Activated CD4-positive, alpha-beta T cell treated with anti-CD3 and anti-CD28 coated beads for 36 hours (primary cell): ENCODE measurements at regions of chr1 and their contacts with region 1.

Region 1: DNA sequence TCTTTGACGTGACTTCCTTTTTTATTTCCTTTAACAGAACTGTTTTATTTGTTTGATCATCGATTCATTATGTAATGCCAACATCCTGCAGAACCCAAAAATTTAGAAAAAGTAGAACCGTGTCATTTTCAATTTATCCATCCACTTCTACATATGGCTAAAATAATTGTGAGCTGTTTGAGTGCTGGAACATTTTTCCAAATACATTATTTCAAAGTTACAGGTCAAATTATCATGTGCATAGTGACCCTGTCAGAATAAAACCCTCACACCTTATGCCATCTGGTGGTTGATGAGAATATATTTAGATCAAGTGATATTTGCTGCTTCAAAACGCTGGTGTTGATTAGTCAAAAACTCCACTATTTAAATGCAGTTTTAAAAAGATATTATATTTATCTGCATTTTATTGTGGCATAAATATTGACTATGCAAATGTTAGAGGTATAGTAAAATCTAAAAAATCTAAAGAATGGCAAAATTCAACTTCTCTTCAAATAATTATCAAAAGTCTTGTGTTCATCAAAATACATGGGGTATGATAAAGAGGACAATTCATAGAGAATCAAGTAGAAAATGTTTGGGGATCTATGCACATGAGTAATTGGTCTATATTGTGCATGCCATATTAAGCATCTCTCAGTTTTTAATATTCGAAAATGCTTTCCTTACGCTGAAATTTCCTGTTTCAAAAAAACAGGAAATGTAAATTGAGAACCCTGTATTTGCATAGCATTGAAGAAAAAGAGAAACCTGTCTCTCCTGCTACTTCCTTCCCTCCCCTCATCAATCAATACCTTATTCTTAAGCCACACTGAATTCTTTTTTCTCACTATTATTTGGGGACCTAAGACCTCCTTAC is 39.7 kb downstream of the UBE2U start:
- DNase-seq: no peak
- ATAC-seq: peak; percentile 30
- H3K4me3 Mint-ChIP-seq: peak overlapping the region; percentile 1
- H3K27ac Mint-ChIP-seq: peak overlapping the region; percentile 45
- H3K4me1 Mint-ChIP-seq: peaks cover 19% of the 10 kb centered on the region
- H3K27me3 Mint-ChIP-seq: peaks cover 12% of the 10 kb centered on the region

Region 2: DNA sequence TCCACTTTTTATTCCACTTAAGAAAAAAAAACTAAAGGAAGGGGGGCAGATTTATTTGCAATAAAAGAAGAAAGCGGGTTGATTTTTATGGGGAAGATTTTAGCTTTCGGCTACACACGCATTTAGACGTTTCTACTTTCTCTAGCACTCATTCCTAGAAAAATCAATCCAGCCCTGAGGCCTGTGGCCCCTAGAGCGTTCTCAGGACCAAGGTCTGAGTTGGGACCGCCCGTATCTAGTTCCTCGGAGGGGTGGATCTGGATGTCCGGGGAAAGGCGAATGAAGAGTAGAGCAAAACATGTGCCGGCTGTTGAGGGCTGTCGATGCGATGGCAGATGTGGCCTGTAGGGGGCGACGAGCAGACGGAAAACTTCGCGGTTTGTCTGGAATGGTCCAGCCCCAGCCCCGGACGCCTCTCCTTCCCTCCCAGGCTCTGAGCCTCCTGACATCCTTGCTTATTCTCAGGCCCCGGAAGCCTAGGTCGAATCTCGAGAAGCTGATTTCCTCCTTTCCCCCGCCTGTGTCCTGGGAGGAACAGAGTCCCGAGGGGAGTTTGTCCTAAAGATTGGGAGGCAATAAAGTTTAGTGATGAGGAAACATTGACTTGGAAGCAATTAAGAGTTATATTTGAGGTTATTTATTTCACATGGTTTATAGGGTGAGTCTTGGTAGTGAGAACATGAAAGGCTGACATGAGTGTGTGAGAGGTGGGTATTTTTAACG is 915.5 kb before region 1 on chr1:
- CTCF ChIA-PET with region 1: no interaction called
- POLR2A ChIA-PET with region 1: interaction called, 3 read pairs
- intact Hi-C with region 1: loop called in 1 of 2 experiments (anchors 10 kb)
- DNase-seq: peak; percentile 79
- ATAC-seq: peak; percentile 61
- H3K4me3 Mint-ChIP-seq: peak overlapping the region; percentile 0
- H3K27ac Mint-ChIP-seq: no peak overlapping the region
- H3K4me1 Mint-ChIP-seq: peaks cover 24% of the 10 kb centered on the region
- H3K27me3 Mint-ChIP-seq: peaks cover 61% of the 10 kb centered on the region

Region 3: GRCh38 chr1:63575340-63575826 is 667.7 kb before region 1 on chr1:
- CTCF ChIA-PET with region 1: interaction called, 6 read pairs
- POLR2A ChIA-PET with region 1: no interaction called
- intact Hi-C with region 1: loop called (anchors 5 kb)
- DNase-seq: no peak
- ATAC-seq: no peak
- H3K4me3 Mint-ChIP-seq: no peak overlapping the region
- H3K27ac Mint-ChIP-seq: no peak overlapping the region
- H3K4me1 Mint-ChIP-seq: no peaks in the 10 kb centered on the region
- H3K27me3 Mint-ChIP-seq: no peaks in the 10 kb centered on the region

Region 4: DNA sequence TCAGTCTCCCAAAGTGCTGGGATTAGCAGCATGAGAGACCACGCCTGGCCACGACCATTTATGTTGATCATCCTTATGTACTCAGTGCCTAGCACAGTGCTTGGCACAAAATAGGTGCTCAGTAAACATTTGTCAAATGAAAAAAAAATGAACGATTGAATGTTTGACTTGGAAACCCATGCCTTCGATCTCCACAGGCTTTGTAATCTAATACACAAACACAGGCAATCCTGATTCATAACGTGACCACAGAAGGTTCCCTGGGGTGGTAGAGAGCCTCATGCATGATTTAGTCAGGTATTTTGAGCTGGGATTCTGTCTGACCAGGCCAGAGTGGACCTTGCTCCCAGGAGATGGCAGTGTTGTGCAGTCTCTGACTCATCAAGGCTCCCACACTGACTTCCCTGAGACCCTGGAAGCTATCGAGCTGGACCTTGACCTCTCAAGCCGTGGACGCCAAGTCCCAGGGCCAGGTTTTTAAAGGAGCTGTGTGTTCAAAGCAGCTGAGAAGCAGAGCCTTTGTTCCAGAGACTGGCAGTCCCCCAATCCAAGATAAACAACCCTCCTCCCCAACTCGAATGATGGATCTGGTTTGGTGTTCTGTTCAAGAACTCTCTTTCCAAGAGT is 568.8 kb before region 1 on chr1:
- CTCF ChIA-PET with region 1: interaction called, 3 read pairs
- POLR2A ChIA-PET with region 1: no interaction called
- intact Hi-C with region 1: loop called in 1 of 2 experiments (anchors 5 kb)
- DNase-seq: peak; percentile 32
- ATAC-seq: no peak
- H3K4me3 Mint-ChIP-seq: no peak overlapping the region
- H3K27ac Mint-ChIP-seq: no peak overlapping the region
- H3K4me1 Mint-ChIP-seq: no peaks in the 10 kb centered on the region
- H3K27me3 Mint-ChIP-seq: no peaks in the 10 kb centered on the region

Region 5: GRCh38 chr1:63773815-63774616 is 469.1 kb before region 1 on chr1 and contains the start of gene ROR1:
- CTCF ChIA-PET with region 1: interaction called, 5 read pairs
- POLR2A ChIA-PET with region 1: no interaction called
- intact Hi-C with region 1: loop called (anchors 5 to 10 kb)
- DNase-seq: peak; percentile 85
- ATAC-seq: peak; percentile 98
- H3K4me3 Mint-ChIP-seq: peak within 1 kb of the TSS; percentile 66
- H3K27ac Mint-ChIP-seq: no peak within 1 kb of the TSS
- H3K4me1 Mint-ChIP-seq: peaks cover 13% of the 10 kb centered on the region
- H3K27me3 Mint-ChIP-seq: peaks cover 50% of the 10 kb centered on the region
- total RNA-seq, gene ROR1: 0.21 TPM in 1 of 2 experiments, not detected in the other

Region 6: DNA sequence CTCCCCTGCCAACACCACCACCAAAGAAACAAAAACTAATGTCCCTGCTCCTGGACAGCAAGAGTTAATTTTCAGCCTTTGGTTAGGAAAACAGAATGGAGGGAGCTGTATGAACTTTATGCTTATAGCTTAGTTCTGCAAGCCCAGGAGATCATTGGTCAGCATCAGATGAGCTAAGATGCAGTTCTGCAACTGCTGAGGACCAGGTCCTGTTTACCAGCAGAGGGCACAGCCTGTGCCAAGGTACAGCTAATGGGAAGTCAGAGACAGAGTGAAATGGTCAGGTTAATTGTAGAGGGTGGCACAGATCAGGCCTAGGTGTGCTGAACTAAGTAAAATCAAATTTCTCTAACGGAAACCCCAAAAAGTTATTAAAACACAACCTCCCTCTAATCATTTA is 308.0 kb before region 1 on chr1:
- CTCF ChIA-PET with region 1: no interaction called
- POLR2A ChIA-PET with region 1: no interaction called
- intact Hi-C with region 1: loop called in 1 of 2 experiments (anchors 10 kb)
- DNase-seq: no peak
- ATAC-seq: no peak
- H3K4me3 Mint-ChIP-seq: no peak overlapping the region
- H3K27ac Mint-ChIP-seq: no peak overlapping the region
- H3K4me1 Mint-ChIP-seq: no peaks in the 10 kb centered on the region
- H3K27me3 Mint-ChIP-seq: no peaks in the 10 kb centered on the region

Region 7: GRCh38 chr1:64231153-64231552 is 12.0 kb before region 1 on chr1:
- CTCF ChIA-PET with region 1: interaction called, 12 read pairs
- POLR2A ChIA-PET with region 1: no interaction called
- intact Hi-C with region 1: no loop called
- DNase-seq: no peak
- ATAC-seq: no peak
- H3K4me3 Mint-ChIP-seq: no peak overlapping the region
- H3K27ac Mint-ChIP-seq: no peak overlapping the region
- H3K4me1 Mint-ChIP-seq: no peaks in the 10 kb centered on the region
- H3K27me3 Mint-ChIP-seq: peaks cover 19% of the 10 kb centered on the region